Activated T-helper 2 cell treated with anti-CD3 and anti-CD28 coated beads, Interferon-gamma antibody, Interleukin-2, Interleukin-4, amounts not matched to agents 10 μg/mL and 5 μg/mL and 100 μg/mL, durations not matched to agents 14 hours and 24 hours and 36 hours (primary cell): ENCODE measurements at regions of chr1 and their contacts with region 1.

Region 1: DNA sequence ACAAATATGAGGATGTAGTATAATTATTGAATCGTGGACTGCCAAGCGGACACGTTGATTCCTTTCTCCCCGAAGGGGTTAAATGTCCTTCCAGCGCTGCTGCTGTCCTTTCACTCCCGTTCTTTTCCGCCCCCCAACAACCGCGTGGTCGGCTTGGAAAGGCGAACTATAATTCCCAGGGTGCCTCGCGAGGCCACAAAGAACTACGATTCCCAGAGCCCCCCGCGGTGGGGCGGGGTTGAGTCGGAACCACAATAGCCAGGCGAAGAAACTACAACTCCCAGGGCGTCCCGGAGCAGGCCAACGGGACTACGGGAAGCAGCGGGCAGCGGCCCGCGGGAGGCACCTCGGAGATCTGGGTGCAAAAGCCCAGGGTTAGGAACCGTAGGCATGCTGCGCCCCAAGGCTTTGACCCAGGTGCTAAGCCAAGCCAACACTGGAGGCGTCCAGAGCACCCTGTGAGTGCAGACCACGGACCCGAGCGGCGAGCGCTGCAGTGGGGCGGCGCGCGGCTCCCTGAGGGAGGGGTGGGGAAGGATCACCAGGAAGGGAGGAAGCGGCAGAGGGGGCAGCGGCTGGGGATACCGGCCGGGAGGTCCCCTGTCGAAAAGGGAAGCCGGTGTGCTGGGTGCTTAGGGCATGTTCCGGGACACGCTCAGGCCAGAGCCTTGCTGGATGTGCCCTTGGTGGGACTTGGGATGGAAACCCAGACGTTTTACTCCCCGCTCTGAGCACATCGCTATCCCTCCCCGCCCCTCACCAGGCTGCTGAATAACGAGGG is at the start of gene LAMTOR2:
- DNase-seq: peak; percentile 94
- H3K4me3 Mint-ChIP-seq: peak within 1 kb of the TSS; percentile 96
- H3K27ac Mint-ChIP-seq: peak within 1 kb of the TSS; percentile 96
- H3K4me1 Mint-ChIP-seq: peaks cover 25% of the 10 kb centered on the region
- H3K27me3 Mint-ChIP-seq: no peaks in the 10 kb centered on the region
- total RNA-seq, gene LAMTOR2: 71.0 and 72.5 TPM in 2 replicates

Region 2: GRCh38 chr1:155688324-155689080 is 366.2 kb before region 1 on chr1 and contains the start of gene YY1AP1:
- intact Hi-C with region 1: loop called (anchors 1 kb)
- DNase-seq: peak; percentile 89
- H3K4me3 Mint-ChIP-seq: peak within 1 kb of the TSS; percentile 97
- H3K27ac Mint-ChIP-seq: peak within 1 kb of the TSS; percentile 96
- H3K4me1 Mint-ChIP-seq: peaks cover 52% of the 10 kb centered on the region
- H3K27me3 Mint-ChIP-seq: no peaks in the 10 kb centered on the region
- total RNA-seq, gene YY1AP1: 65.8 and 67.9 TPM in 2 replicates

Region 3: DNA sequence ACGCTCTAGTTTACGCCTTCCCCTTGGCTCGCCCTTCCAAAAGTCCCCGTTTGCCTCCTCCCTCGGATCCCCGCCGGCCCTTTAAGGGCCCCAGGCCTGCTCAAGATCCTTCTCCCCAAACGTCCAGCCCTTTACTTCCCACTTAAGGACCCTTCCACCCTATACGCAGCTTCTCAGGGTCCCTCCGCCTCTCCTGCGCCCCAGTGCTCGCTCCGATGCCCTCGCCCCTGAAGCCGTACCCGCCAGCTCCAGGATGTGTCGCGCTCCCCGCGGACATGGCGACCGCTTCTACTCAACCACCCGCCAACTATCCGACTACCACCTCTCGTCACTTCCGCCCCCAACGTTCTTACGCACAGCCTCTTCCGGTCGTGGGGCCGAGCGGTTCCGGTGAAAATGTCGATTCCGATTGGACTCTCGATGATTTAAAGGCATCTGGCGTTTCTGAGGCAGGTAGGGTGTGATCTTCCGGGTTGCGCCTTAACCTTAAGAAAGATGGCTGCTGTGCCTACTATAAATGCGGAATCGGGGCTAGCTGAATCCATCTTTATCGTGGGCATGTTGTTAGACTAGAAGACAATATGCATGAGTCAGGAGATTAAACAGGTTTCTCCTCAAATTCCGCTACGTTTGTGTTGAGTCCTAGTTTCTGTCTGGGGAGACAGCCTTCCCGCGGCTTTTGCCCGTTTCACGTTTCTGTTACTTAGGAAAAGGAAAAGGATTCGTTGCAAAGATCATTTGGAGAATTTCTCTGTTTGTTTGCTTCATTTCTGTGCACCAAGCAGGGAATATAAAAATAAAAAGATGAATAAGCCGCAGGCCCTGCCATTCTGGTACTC is 120.4 kb before region 1 on chr1 and contains the start of gene KHDC4:
- intact Hi-C with region 1: loop called (anchors 1 kb)
- DNase-seq: peak; percentile 96
- H3K4me3 Mint-ChIP-seq: no peak within 1 kb of the TSS
- H3K27ac Mint-ChIP-seq: peak within 1 kb of the TSS; percentile 58
- H3K4me1 Mint-ChIP-seq: peaks cover 28% of the 10 kb centered on the region
- H3K27me3 Mint-ChIP-seq: no peaks in the 10 kb centered on the region
- total RNA-seq, gene KHDC4: 78.4 and 83.5 TPM in 2 replicates

Region 4: GRCh38 chr1:156082309-156083091 is 27.8 kb after region 1 on chr1 and contains the start of gene MEX3A:
- intact Hi-C with region 1: loop called (anchors 1 kb)
- DNase-seq: peak; percentile 45
- H3K4me3 Mint-ChIP-seq: peak within 1 kb of the TSS; percentile 85
- H3K27ac Mint-ChIP-seq: peak within 1 kb of the TSS; percentile 29
- H3K4me1 Mint-ChIP-seq: peaks cover 4% of the 10 kb centered on the region
- H3K27me3 Mint-ChIP-seq: peaks cover 74% of the 10 kb centered on the region
- total RNA-seq, gene MEX3A: 1.2 and 1.6 TPM in 2 replicates

Region 5: DNA sequence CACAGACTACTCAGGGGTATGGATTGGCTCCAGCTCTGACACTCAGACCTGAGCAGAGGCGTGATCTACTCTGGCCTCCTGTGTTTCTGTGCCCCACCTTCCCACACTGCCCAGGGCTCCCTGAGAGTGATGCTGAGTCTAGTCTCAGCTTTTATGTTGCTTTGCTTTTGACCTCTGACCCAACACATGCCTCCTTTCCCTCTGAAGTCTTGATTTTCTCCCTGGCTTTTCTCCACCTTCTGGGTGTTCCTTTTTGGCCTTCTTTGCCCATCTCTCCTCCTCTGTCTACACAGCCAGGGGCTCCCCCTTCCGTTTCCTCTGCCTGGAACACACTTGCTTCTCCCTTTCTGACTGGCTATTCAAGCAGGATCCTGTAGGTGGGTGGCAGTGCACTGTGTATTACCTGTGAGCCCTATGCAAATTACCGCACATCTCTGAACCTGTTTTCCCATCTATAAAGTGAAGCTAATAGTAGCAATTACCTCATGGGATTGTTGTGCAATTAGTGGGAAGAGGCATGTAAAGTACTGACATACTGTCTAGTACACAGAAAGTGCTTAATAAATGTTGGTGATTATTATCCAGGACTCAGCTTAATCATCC is 41.3 kb after region 1 on chr1:
- intact Hi-C with region 1: no loop called
- DNase-seq: no peak
- H3K4me3 Mint-ChIP-seq: no peak overlapping the region
- H3K27ac Mint-ChIP-seq: peak overlapping the region; percentile 95
- H3K4me1 Mint-ChIP-seq: peaks cover 41% of the 10 kb centered on the region
- H3K27me3 Mint-ChIP-seq: peaks cover 5% of the 10 kb centered on the region